Ovary (tissue), 10 donors: ENCODE measurements at regions of chr12 and their contacts with region 1.

Region 1: DNA sequence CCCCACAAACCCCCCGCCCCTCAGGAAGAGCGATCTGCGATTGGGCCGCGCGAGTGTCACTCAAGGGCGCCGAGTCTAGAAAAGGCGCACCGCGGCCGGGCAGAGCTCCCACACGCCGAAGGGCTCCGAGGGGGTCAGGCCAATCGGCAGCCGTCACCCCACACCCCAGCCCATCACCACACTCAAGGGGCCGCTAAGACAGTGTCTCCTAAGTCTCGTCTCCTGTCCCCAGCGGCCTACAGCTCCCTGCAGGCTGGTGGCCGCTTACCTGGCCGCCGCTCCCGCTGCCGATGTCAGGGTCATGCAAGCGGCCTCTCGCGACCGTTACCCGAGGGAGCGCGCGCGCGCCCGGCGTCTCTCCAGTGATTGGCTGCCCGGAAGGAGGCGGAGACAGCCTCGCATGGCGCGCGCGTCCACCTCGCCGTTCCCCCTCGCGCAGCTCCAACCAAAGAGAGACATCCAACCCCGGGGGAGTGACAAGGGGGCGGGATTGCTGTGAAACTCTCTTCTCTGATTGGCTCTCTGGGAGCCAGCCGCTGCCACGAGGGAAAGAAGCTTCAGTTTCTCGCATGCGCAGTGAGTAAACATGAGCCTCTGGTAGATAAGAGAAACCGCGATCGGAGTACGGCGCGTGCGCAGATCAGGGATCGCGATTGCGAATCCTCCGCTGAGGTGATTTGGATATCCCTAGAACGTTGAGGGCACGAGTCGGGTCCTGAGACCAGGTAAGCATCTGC is at the starts of genes MPHOSPH9 and MTRFR:
- DNase-seq: peak; percentile 98 to 99 (median 98)
- H3K4me3 ChIP-seq: peak within 1 kb of the TSS; percentile 96
- H3K27ac ChIP-seq: peak within 1 kb of the TSS; percentile 69 to 86
- H3K4me1 ChIP-seq: peaks cover 10% of the 10 kb centered on the region
- H3K27me3 ChIP-seq: no peaks in the 10 kb centered on the region
- CTCF ChIP-seq: peak in 1 of 3 donors; percentile 21
- EP300 ChIP-seq: no peak
- POLR2A ChIP-seq: peak; percentile 99
- total RNA-seq, gene MPHOSPH9: 14.2 to 28.4 (median 21.9) TPM
- total RNA-seq, gene MTRFR: 13.4 to 21.2 (median 17.3) TPM

Region 2: DNA sequence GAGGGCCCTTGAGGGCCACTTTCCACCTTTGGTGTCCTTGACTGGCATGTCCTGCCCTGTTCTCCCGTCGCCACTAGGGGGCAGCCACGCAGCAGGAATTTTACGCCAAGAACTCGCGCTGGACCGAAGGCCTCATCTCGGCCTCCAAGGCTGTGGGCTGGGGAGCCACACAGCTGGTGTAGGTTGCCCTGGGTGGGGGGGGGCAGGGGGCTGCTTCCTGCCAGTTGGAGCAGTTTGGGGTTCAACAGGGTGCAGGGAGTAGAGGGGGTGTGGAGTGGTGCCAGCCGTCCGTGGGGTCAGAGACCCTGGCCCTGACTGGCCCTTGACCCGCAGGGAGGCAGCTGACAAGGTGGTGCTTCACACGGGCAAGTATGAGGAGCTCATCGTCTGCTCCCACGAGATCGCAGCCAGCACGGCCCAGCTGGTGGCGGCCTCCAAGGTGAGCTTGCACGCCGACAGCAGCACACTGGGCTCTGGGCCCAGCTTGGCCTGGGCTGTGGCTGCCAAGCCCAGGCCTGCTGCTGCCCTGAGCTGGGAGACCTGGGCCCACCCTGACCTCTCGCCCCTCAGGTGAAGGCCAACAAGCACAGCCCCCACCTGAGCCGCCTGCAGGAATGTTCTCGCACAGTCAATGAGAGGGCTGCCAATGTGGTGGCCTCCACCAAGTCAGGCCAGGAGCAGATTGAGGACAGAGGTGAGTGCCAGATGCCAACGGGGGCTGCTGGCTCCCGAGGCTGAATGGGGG is 372.5 kb before region 1 on chr12:
- intact Hi-C with region 1: loop called in 3 of 4 experiments (anchors 5 to 10 kb)
- DNase-seq: peak; percentile 85 to 94 (median 92)
- H3K4me3 ChIP-seq: no peak overlapping the region
- H3K27ac ChIP-seq: peak overlapping the region; percentile 29 to 34
- H3K4me1 ChIP-seq: peaks cover 2% of the 10 kb centered on the region
- H3K27me3 ChIP-seq: no peaks in the 10 kb centered on the region
- CTCF ChIP-seq: peak; percentile 78 to 96 (median 94)
- EP300 ChIP-seq: no peak
- POLR2A ChIP-seq: no peak

Region 3: DNA sequence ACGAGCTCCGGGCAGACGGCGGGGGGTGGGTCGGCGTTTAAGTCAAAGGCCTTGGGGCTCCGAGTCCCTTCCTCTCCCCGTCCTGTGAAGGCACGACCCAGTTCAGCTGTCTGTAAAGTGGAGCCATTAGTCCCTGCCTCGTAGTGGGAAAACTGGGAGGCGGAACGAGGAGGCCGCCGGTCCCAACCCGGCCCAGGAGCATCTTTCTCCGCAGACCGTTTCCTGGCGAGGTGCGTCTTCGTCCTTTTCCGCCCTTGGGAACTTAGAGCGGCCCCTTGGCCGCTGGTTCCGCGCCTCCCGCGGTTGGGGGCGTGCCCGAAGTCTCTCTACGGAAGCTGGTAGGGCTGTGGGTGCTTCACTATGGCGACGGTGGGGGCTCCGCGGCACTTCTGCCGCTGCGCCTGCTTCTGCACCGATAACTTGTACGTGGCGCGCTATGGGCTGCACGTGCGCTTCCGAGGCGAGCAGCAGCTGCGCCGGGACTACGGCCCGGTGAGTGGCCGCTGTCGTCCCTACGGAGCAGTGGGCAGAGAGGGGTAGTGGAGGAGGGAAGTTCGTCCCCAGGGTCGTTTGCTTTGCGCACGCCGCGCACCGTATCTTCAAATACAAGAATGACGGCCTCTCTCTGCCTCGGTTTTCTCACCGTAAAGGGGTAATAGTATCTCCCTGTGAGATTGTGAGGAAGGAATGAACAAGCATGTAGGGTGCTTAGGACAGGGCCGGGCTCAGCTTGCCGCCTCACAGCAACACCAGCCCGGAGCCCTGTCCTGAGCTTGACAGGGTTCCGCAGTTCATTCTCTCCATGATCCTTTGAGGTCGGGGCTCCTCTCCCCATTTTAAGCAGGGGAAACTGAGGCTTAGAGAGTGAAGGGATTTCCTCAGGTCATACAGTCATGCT is 257.8 kb before region 1 on chr12 and contains the start of gene OGFOD2:
- intact Hi-C with region 1: loop called (anchors 5 kb)
- DNase-seq: peak; percentile 88 to 94 (median 91)
- H3K4me3 ChIP-seq: peak within 1 kb of the TSS; percentile 81
- H3K27ac ChIP-seq: peak within 1 kb of the TSS; percentile 95 to 97
- H3K4me1 ChIP-seq: peaks cover 10% of the 10 kb centered on the region
- H3K27me3 ChIP-seq: no peaks in the 10 kb centered on the region
- CTCF ChIP-seq: peak in 2 of 3 donors; percentile 34 to 36
- EP300 ChIP-seq: no peak
- POLR2A ChIP-seq: no peak
- total RNA-seq, gene OGFOD2: 10.6 to 17.6 (median 16.8) TPM

Region 4: GRCh38 chr12:122980183-122981046 is 252.6 kb before region 1 on chr12 and contains the start of gene ARL6IP4:
- intact Hi-C with region 1: loop called (anchors 5 kb)
- DNase-seq: peak; percentile 56 to 79 (median 70)
- H3K4me3 ChIP-seq: peak within 1 kb of the TSS; percentile 87
- H3K27ac ChIP-seq: peak within 1 kb of the TSS; percentile 67 to 88
- H3K4me1 ChIP-seq: peaks cover 32% of the 10 kb centered on the region
- H3K27me3 ChIP-seq: no peaks in the 10 kb centered on the region
- CTCF ChIP-seq: peak in 1 of 3 donors; percentile 38
- EP300 ChIP-seq: no peak
- POLR2A ChIP-seq: peak; percentile 80
- total RNA-seq, gene ARL6IP4: 158 to 216 (median 192) TPM

Region 5: GRCh38 chr12:123043536-123044001 is 189.4 kb before region 1 on chr12:
- intact Hi-C with region 1: loop called (anchors 2 to 10 kb)
- DNase-seq: peak; percentile 85 to 91 (median 89)
- H3K4me3 ChIP-seq: no peak overlapping the region
- H3K27ac ChIP-seq: peak overlapping the region; percentile 72 to 77
- H3K4me1 ChIP-seq: peaks cover 42% of the 10 kb centered on the region
- H3K27me3 ChIP-seq: no peaks in the 10 kb centered on the region
- CTCF ChIP-seq: peak; percentile 41 to 88 (median 78)
- EP300 ChIP-seq: no peak
- POLR2A ChIP-seq: peak; percentile 38

Region 6: DNA sequence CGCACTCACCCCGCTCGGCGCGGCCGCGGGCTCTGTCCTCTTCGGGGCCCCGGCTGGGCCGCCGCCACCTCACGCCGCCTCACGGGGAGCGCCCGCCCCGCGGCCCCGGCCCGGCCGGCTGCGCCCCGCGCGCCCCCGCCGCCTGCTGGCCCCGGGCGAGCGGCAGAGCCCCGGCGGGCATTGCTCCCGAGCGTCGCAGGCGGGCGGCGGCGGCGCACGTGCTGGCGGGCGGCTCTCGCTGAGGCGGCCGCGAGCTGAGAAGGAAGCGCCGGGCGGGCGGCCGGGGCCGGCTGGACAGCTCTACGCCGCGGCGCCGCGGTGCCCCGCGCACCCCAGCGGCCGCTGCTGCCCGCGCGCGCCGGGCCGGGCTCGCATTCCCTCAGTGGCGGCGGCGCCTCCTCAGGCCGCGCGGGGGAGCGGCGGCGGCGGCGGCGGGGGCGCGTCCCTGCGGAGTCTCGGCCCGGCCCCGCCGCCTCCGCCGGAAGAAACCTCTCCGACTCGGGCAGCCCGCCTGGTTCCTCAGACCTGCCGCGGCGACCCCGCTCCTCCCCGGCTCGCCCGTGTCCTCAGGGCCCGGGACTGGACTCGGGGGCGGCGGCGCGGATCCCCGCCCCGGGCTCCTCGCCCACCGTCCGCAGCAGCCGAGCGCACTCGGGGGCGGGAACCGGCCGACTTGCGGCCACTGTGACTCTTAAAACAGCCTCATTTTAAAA is 82.1 kb before region 1 on chr12 and contains the start of gene PITPNM2:
- intact Hi-C with region 1: loop called in 1 of 4 experiments (anchors 5 kb)
- DNase-seq: peak; percentile 65 to 84 (median 74)
- H3K4me3 ChIP-seq: peak within 1 kb of the TSS; percentile 90
- H3K27ac ChIP-seq: peak within 1 kb of the TSS; percentile 98 to 99
- H3K4me1 ChIP-seq: peaks cover 17% of the 10 kb centered on the region
- H3K27me3 ChIP-seq: no peaks in the 10 kb centered on the region
- CTCF ChIP-seq: peak in 2 of 3 donors; percentile 34 to 35
- EP300 ChIP-seq: no peak
- POLR2A ChIP-seq: no peak
- total RNA-seq, gene PITPNM2: 11.1 to 71.8 (median 38.2) TPM

Region 7: DNA sequence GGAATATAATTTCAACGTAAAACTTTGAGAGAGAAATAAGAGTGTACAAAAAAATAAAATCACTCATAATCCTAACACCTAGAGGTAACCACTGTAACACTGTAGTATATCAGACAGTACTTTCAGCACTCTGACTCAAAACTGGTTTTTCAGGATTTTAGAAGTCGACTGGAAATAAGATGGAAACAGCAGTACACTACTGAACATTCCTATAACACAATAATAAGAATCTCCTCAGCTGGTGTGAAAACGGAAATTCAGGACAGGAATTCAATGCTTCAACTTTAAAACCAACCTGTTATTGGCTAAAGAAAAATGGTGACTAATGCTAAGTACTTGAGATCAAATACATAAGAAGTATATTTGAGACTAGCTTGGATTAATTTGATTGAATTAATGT is 69.7 kb before region 1 on chr12:
- intact Hi-C with region 1: loop called in 1 of 4 experiments (anchors 5 kb)
- DNase-seq: no peak
- H3K4me3 ChIP-seq: no peak overlapping the region
- H3K27ac ChIP-seq: no peak overlapping the region
- H3K4me1 ChIP-seq: no peaks in the 10 kb centered on the region
- H3K27me3 ChIP-seq: no peaks in the 10 kb centered on the region
- CTCF ChIP-seq: no peak
- EP300 ChIP-seq: no peak
- POLR2A ChIP-seq: no peak

Region 8: DNA sequence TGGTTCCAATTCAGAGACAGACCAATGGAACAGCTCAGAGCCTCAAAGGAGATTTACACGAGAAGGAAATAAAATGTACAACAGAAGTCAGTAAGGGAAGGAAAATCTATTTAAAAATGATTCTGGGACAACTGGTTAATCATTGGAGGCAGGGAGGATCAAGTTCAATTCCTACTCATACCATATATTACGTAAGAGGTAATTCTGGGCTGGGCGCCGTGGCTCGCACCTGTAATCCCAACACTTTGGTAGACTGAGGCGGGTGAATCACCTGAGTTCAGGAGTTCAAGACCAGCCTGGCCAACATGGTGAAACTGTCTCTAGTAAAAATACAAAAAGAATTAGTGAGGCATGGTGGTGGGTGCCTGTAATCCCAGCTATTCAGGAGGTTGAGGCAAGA is 45.3 kb before region 1 on chr12:
- intact Hi-C with region 1: no loop called
- DNase-seq: no peak
- H3K4me3 ChIP-seq: no peak overlapping the region
- H3K27ac ChIP-seq: no peak overlapping the region
- H3K4me1 ChIP-seq: no peaks in the 10 kb centered on the region
- H3K27me3 ChIP-seq: no peaks in the 10 kb centered on the region
- CTCF ChIP-seq: no peak
- EP300 ChIP-seq: no peak
- POLR2A ChIP-seq: no peak

Region 9: GRCh38 chr12:123427036-123427769 is 194.2 kb after region 1 on chr12:
- intact Hi-C with region 1: no loop called
- DNase-seq: no peak
- H3K4me3 ChIP-seq: no peak overlapping the region
- H3K27ac ChIP-seq: no peak overlapping the region
- H3K4me1 ChIP-seq: no peaks in the 10 kb centered on the region
- H3K27me3 ChIP-seq: no peaks in the 10 kb centered on the region
- CTCF ChIP-seq: no peak
- EP300 ChIP-seq: no peak
- POLR2A ChIP-seq: no peak